ENCODE measurements at regions of chr3 and their contacts with region 1.

Region 1: GRCh38 chr3:194333212-194333980 is 17.7 kb downstream of the CPN2 start:
- DNase-seq: peak; percentile 79 to 91 (median 86)
- ATAC-seq: peak; percentile 97
- H3K4me3 ChIP-seq: peak overlapping the region; percentile 37
- H3K27ac ChIP-seq: no peak overlapping the region
- H3K4me1 ChIP-seq: peaks cover 3 to 23% of the 10 kb centered on the region in 2 experiments; a peak in 4 of 5 replicates
- H3K27me3 ChIP-seq: peaks cover 22 to 65% of the 10 kb centered on the region in 2 experiments
- CTCF ChIP-seq: peak; percentile 96
- EP300 ChIP-seq: no peak
- POLR2A ChIP-seq: no peak
- RAD21 ChIP-seq: peak; percentile 97 to 98

Region 2: DNA sequence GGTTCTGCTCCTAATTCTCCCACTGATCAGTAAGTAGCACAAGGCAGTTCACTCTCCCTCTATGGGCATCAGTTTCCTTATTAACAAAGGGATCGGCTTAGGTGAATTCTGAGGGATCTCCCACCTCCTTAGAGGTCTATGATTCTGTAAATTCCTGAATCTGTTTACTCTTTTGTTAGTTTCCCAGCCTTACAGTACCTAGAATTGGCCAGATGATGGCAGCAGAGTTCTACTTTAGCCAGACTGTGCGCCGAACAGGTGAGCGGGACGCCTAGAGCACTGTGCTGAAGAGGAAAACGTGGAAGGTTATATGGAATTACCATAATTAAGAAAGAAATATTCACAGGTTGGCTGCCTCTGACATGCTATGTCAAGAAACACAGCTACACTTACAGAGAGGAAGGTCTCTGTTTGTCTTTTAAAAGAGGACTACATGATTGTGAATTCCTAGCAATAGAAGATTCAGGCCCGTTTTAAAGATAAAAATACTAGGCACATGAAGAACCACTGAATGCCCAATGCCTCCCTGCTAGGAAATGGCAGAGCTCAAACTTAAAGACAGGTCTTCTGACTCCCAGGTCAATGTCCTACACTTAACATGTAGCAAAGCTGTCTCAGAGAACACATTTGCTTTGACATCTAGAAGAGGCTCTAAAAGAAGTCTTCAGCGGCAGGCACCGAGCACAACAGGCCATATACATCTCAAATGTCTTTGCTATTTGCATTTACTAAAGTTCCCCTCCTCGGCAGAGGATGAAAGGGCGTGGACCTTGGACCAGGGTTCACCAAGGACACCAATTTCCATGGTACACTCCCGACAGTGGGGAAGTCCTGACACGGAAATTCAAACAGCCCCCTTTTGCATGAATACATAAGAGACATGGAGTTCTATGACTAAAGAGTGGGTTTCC is 1865.9 kb before region 1 on chr3:
- CTCF ChIA-PET with region 1: no interaction called
- POLR2A ChIA-PET with region 1: no interaction called
- in situ Hi-C with region 1: loop called (anchors 25 kb)
- intact Hi-C with region 1: no loop called
- DNase-seq: peak; percentile 48 to 65 (median 60)
- ATAC-seq: peak; percentile 93
- H3K4me3 ChIP-seq: no peak overlapping the region
- H3K27ac ChIP-seq: no peak overlapping the region
- H3K4me1 ChIP-seq: no peaks in the 10 kb centered on the region
- H3K27me3 ChIP-seq: no peaks in the 10 kb centered on the region
- CTCF ChIP-seq: peak; percentile 59 to 83 (median 78)
- EP300 ChIP-seq: no peak
- POLR2A ChIP-seq: no peak
- RAD21 ChIP-seq: peak; percentile 67 to 75

Region 3: DNA sequence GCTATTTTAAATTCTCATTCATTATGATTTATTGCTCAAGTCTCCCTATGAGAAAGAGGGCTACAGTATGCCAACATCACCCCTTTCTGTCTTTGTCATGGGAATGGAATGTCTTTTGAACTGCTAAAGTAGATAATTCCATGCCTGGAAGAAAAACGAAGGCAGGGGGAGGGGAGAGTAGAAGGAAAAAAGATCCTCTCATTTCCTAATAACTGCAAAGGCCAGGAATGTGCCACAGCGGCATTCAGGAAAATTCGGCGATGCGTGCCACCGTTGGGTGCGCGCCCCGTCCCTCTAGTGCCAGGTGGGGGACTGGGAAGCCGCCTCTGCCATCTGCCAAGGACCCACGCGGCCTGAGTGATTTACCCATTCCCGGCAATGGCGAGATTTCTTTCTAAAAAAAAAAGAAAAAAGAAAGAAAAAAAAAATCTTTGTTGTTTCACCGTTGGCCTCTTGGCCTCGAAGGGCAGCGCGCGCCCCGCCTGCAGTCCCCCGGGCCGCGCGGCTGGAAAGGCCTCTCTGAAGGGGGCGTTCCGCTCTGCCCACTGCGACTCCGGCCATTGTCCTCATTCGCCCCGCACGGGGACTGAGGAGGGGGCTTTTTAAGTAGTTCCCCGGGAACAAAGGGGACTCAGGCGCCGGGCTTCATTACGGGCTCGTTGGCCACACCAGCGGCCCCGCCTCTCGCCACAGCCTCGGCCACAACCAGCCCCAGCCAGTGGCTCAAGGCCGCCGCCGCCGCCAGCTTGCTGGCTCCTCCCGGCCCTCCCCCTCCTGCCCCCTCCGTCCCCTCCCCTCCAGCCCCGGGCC is 36.7 kb before region 1 on chr3:
- CTCF ChIA-PET with region 1: no interaction called
- POLR2A ChIA-PET with region 1: no interaction called
- in situ Hi-C with region 1: no loop called
- intact Hi-C with region 1: no loop called
- DNase-seq: no peak
- ATAC-seq: no peak
- H3K4me3 ChIP-seq: no peak overlapping the region
- H3K27ac ChIP-seq: no peak overlapping the region
- H3K4me1 ChIP-seq: peaks cover 0 to 3% of the 10 kb centered on the region in 2 experiments; a peak in 1 of 5 replicates
- H3K27me3 ChIP-seq: no peaks in the 10 kb centered on the region
- CTCF ChIP-seq: no peak
- EP300 ChIP-seq: no peak
- POLR2A ChIP-seq: no peak
- RAD21 ChIP-seq: no peak

Region 4: GRCh38 chr3:194536871-194537637 is 203.7 kb after region 1 on chr3:
- CTCF ChIA-PET with region 1: no interaction called
- POLR2A ChIA-PET with region 1: no interaction called
- in situ Hi-C with region 1: no loop called
- intact Hi-C with region 1: no loop called
- DNase-seq: no peak
- ATAC-seq: peak; percentile 47; the same call in 2 of the 3 replicates
- H3K4me3 ChIP-seq: no peak overlapping the region
- H3K27ac ChIP-seq: no peak overlapping the region
- H3K4me1 ChIP-seq: no peaks in the 10 kb centered on the region; a peak in 2 of 5 replicates
- H3K27me3 ChIP-seq: no peaks in the 10 kb centered on the region
- CTCF ChIP-seq: no peak
- EP300 ChIP-seq: no peak
- POLR2A ChIP-seq: no peak
- RAD21 ChIP-seq: no peak

Region 5: DNA sequence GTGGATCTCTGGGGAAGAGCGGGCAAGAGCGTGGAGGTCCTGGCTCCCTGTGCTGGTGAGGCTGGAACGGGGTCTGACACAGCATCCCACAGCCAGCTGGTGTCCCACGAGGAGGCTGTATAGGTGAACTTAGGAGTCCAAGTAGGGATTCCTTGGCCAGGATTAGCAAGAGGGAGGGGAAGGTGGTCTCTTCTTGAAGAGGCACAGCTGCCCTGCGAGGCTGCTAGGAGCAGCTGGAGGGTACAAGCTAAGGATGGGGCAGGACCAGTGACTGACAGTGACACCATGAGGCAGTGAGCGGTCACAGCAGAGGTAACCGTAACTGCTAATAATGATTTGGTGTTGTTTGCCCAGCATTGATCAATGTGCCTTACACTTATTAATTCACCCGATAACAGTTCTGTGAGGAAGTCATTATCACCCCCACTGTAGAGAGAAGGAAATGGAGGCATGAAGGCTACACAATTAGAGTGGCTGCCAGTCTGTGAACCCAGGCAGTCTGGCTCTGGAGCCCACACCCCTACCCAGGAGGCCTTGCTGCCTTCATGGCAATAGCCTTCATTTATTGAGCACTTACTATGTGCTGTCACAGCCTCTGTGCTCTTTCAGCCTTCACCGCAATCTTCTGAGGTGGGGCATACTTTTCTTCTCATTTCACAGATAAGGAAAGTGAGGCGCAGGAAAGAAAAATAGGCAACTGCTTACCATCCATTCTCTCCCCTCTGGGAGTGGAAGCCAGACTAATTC is 240.5 kb after region 1 on chr3:
- CTCF ChIA-PET with region 1: no interaction called
- POLR2A ChIA-PET with region 1: interaction called, 3 read pairs
- in situ Hi-C with region 1: no loop called
- intact Hi-C with region 1: loop called (anchors 5 kb)
- DNase-seq: peak; percentile 33 to 70 (median 56)
- ATAC-seq: peak; percentile 80
- H3K4me3 ChIP-seq: no peak overlapping the region
- H3K27ac ChIP-seq: no peak overlapping the region
- H3K4me1 ChIP-seq: peaks cover 39 to 53% of the 10 kb centered on the region in 2 experiments
- H3K27me3 ChIP-seq: no peaks in the 10 kb centered on the region
- CTCF ChIP-seq: peak; percentile 68 to 78 (median 73)
- EP300 ChIP-seq: no peak
- POLR2A ChIP-seq: no peak
- RAD21 ChIP-seq: peak; percentile 68 to 81

Region 6: GRCh38 chr3:194592798-194593752 is 259.7 kb after region 1 on chr3:
- CTCF ChIA-PET with region 1: interaction called, 4 read pairs
- POLR2A ChIA-PET with region 1: no interaction called
- in situ Hi-C with region 1: loop called (anchors 10 kb)
- intact Hi-C with region 1: loop called (anchors 5 kb)
- DNase-seq: no peak
- ATAC-seq: no peak
- H3K4me3 ChIP-seq: no peak overlapping the region
- H3K27ac ChIP-seq: no peak overlapping the region
- H3K4me1 ChIP-seq: peaks cover 0 to 5% of the 10 kb centered on the region in 2 experiments; a peak in 2 of 5 replicates
- H3K27me3 ChIP-seq: no peaks in the 10 kb centered on the region
- CTCF ChIP-seq: no peak
- EP300 ChIP-seq: no peak
- POLR2A ChIP-seq: no peak
- RAD21 ChIP-seq: no peak

Region 7: DNA sequence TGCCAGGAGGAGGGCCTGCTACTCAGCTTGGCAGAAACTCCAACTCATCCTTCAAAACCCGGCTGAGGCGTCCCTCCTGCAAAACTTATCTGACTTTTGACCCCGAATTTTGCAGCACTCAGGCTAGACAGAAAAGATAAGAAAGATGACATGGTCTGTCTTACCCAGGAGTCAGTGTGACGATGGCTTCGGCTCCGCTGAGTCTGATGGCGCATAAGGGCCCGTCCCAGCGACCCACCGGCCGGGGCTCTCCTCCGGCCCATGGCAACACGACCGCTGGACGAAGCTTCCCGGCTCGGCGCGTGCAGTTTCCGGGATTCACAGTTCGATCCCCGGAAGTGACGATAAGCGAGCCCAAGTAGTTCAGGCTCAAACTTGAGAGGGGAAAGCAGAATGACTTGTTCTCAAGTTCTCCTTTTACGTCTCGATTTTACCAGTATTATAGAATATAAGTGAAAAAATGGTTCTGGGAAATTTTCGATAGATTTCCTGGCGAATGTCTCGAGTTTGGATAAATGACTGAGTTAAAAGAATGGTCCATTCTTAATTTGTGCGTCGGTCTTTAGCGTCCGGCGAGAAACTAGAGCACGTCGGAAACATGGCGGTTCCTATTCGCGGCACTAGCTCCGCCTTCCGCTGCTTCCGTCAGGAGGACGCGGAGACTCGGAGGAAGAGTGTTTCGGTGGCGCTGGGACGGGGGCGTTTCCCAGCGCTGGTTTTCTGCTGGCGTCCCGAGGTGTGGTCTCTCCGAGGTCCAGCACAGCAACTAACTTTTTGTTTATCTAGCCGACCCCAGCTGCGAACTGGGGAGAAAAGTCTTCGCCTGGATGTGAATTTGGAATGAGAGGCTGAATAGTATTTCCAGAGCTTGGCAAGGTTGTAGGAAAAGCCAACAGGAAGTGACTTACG is 338.8 kb after region 1 on chr3 and contains the start of gene LSG1:
- CTCF ChIA-PET with region 1: no interaction called
- POLR2A ChIA-PET with region 1: no interaction called
- in situ Hi-C with region 1: no loop called
- intact Hi-C with region 1: loop called (anchors 5 kb)
- DNase-seq: peak; percentile 84 to 98 (median 87)
- ATAC-seq: peak; percentile 98
- H3K4me3 ChIP-seq: peak within 1 kb of the TSS; percentile 100
- H3K27ac ChIP-seq: peak within 1 kb of the TSS; percentile 92
- H3K4me1 ChIP-seq: peaks cover 8 to 10% of the 10 kb centered on the region in 2 experiments; a peak in 3 of 5 replicates
- H3K27me3 ChIP-seq: no peaks in the 10 kb centered on the region
- CTCF ChIP-seq: no peak
- EP300 ChIP-seq: 0 out of 2 replicates have a peak, but pooled peaks have one; percentile 41
- POLR2A ChIP-seq: peak; percentile 77
- RAD21 ChIP-seq: no peak
- polyA plus RNA-seq, gene LSG1: 14.9 to 23.0 TPM

Region 8: GRCh38 chr3:195259475-195260279 is 926.3 kb after region 1 on chr3:
- CTCF ChIA-PET with region 1: no interaction called
- POLR2A ChIA-PET with region 1: no interaction called
- in situ Hi-C with region 1: no loop called
- intact Hi-C with region 1: loop called (anchors 10 kb)
- DNase-seq: peak; percentile 91 to 97 (median 95)
- ATAC-seq: peak; percentile 90
- H3K4me3 ChIP-seq: peak overlapping the region; percentile 55
- H3K27ac ChIP-seq: peak overlapping the region; percentile 89
- H3K4me1 ChIP-seq: peaks cover 14 to 41% of the 10 kb centered on the region in 2 experiments
- H3K27me3 ChIP-seq: no peaks in the 10 kb centered on the region
- CTCF ChIP-seq: peak; percentile 46 to 73 (median 68); a peak in 5 of 6 replicates
- EP300 ChIP-seq: no peak; the same call in 1 of the 2 replicates
- POLR2A ChIP-seq: no peak; the same call in none of the 2 replicates
- RAD21 ChIP-seq: peak; percentile 90 to 96

Region 9: DNA sequence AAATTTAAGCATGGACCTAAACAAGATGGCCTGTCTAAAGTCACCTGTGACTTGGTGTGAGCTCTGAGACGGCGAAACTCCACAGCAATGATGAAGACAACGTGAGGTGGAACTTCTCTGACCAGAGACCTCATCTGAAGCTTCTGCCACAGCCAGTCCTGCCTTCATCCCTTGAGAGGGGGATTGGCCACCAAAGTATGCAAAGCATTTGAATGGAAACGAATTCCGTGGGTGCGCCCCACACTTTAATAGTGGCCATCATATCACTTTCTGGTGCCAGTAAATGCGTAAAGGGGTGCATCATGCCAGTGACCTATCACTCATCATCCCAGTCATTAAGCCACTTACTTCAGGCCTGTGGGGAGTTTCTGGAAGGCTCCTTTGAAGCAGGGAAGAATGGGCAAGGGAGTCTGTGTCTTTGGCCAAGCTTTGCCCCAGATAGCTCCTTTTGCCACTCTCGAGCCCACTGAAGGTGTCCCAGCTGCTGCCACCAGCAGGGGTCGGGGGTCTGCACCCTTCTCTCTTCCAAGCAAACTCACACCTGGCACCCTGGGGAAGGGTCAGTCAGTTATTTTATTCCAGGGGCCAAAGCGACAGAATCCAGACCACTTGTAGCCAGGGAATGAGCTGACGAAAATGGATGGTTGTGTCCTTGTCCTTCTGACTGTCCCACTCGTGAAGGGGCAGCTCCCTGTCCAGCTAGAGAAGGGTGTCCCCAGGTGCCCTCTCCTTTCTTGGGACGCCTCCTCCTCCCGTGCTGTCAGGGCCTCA is 1405.1 kb after region 1 on chr3:
- CTCF ChIA-PET with region 1: no interaction called
- POLR2A ChIA-PET with region 1: no interaction called
- in situ Hi-C with region 1: no loop called
- intact Hi-C with region 1: no loop called
- DNase-seq: no peak
- ATAC-seq: no peak
- H3K4me3 ChIP-seq: no peak overlapping the region
- H3K27ac ChIP-seq: no peak overlapping the region
- H3K4me1 ChIP-seq: no peaks in the 10 kb centered on the region
- H3K27me3 ChIP-seq: peaks cover 47 to 56% of the 10 kb centered on the region in 2 experiments
- CTCF ChIP-seq: no peak
- EP300 ChIP-seq: no peak
- POLR2A ChIP-seq: no peak
- RAD21 ChIP-seq: no peak